Activated CD8-positive, alpha-beta T cell treated with anti-CD3 and anti-CD28 coated beads for 36 hours (primary cell): ENCODE measurements at regions of chr19 and their contacts with region 1.

Region 1: DNA sequence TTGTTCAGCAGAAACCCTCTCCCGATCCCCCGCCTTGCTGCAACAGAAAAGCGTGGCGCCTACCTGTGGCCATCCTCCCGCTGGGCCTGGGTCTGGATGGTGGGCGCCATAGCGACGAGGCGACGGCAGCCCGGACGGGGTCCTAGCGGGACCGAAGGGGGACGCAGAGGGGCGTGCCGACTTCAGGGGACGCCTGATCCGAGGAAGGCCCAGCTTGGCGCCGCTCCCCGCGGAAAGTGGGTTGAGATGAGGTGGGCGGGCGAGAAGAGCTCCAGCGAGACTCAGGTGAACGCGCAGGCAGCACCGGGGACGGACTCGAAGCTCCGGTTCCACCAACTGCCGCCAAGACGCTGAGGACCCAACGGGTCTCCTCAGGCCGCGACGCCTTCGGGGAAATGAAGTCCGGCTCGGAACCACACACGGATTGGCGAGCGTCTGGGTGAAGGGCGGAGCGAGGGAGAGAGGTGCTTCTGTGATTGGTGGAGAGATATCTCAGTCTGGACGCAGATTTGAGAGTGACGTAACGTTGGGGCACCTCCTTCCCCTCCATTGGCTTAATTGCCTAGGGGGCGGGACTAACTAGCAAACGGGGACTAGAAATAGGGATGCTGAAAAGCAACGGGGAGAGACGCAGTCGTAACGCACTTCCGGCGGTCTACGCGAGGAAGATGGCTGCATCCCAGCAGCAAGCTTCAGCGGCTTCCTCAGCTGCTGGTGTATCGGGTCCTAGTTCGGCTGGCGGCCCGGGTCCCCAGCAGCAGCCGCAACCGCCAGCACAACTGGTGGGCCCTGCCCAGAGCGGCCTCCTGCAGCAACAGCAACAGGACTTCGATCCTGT is at the starts of genes MED29 and PAF1:
- DNase-seq: peak; percentile 98
- ATAC-seq: peak; percentile 94
- H3K4me3 Mint-ChIP-seq: peak within 1 kb of the TSS; percentile 97
- H3K27ac Mint-ChIP-seq: peak within 1 kb of the TSS; percentile 99
- H3K4me1 Mint-ChIP-seq: peaks cover 37% of the 10 kb centered on the region
- H3K27me3 Mint-ChIP-seq: no peaks in the 10 kb centered on the region
- CTCF ChIP-seq: no peak
- total RNA-seq, gene MED29: 19.5 to 19.8 TPM
- total RNA-seq, gene PAF1: 35.5 to 36.5 TPM

Region 2: GRCh38 chr19:39199025-39199424 is 191.9 kb before region 1 on chr19:
- CTCF ChIA-PET with region 1: no interaction called
- POLR2A ChIA-PET with region 1: no interaction called
- intact Hi-C with region 1: no loop called
- DNase-seq: no peak
- ATAC-seq: no peak
- H3K4me3 Mint-ChIP-seq: no peak overlapping the region
- H3K27ac Mint-ChIP-seq: no peak overlapping the region
- H3K4me1 Mint-ChIP-seq: peaks cover 19% of the 10 kb centered on the region
- H3K27me3 Mint-ChIP-seq: peaks cover 64% of the 10 kb centered on the region
- CTCF ChIP-seq: no peak

Region 3: DNA sequence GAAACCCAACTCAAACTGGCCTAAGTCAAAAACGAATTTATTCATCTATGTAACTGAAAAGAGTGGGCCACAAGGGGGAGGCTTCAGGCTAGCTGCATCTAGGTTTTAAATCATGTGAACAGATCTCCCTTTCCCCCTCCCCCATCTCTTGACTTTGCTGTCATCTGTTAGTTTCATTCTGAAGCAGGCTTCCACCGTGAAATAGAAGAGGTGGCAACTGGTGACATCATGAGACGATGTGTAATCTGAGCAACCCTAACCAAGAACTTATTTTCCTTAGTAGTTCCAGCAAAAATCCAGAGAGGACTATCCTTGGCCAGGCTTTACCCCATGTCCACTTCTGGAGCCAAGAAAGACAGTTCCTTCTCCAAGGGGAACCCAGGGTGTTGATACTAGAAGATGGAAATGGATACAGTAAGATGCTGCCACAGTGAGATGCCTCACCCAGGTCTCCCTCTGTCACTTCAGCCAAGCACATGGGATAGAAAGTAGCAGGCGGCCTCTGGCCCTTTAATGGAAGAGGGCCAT is 39.4 kb before region 1 on chr19:
- CTCF ChIA-PET with region 1: interaction called, 4 read pairs
- POLR2A ChIA-PET with region 1: interaction called, 5 read pairs
- intact Hi-C with region 1: loop called (anchors 2 kb)
- DNase-seq: peak; percentile 81
- ATAC-seq: peak; percentile 96
- H3K4me3 Mint-ChIP-seq: no peak overlapping the region
- H3K27ac Mint-ChIP-seq: peak overlapping the region; percentile 87
- H3K4me1 Mint-ChIP-seq: peaks cover 43% of the 10 kb centered on the region
- H3K27me3 Mint-ChIP-seq: no peaks in the 10 kb centered on the region
- CTCF ChIP-seq: peak; percentile 2

Region 4: GRCh38 chr19:39406656-39407393 is 15.9 kb after region 1 on chr19 and contains the start of gene ZFP36:
- CTCF ChIA-PET with region 1: interaction called, 153 read pairs
- POLR2A ChIA-PET with region 1: interaction called, 80 read pairs
- intact Hi-C with region 1: no loop called
- DNase-seq: peak; percentile 91
- ATAC-seq: peak; percentile 40
- H3K4me3 Mint-ChIP-seq: peak within 1 kb of the TSS; percentile 79
- H3K27ac Mint-ChIP-seq: peak within 1 kb of the TSS; percentile 93
- H3K4me1 Mint-ChIP-seq: peaks cover 49% of the 10 kb centered on the region
- H3K27me3 Mint-ChIP-seq: no peaks in the 10 kb centered on the region
- CTCF ChIP-seq: no peak
- total RNA-seq, gene ZFP36: 74.6 to 80.3 TPM